OCI-LY7 (cell line): ENCODE measurements at regions of chr5 and their contacts with region 1.

Region 1: GRCh38 chr5:32004404-32004803 is 169.7 kb downstream of the GOLPH3 start:
- DNase-seq: peak; percentile 74
- H3K4me3 ChIP-seq: peak overlapping the region; percentile 52
- H3K27ac ChIP-seq: peak overlapping the region; percentile 80
- H3K4me1 ChIP-seq: peaks cover 34% of the 10 kb centered on the region
- CTCF ChIP-seq: no peak

Region 2: GRCh38 chr5:32020271-32020670 is 15.9 kb after region 1 on chr5:
- CTCF ChIA-PET with region 1: no interaction called
- POLR2A ChIA-PET with region 1: interaction called, 10 read pairs
- intact Hi-C with region 1: no loop called
- DNase-seq: peak; percentile 77
- H3K4me3 ChIP-seq: peak overlapping the region; percentile 53
- H3K27ac ChIP-seq: peak overlapping the region; percentile 63
- H3K4me1 ChIP-seq: peaks cover 56% of the 10 kb centered on the region
- CTCF ChIP-seq: no peak

Region 3: DNA sequence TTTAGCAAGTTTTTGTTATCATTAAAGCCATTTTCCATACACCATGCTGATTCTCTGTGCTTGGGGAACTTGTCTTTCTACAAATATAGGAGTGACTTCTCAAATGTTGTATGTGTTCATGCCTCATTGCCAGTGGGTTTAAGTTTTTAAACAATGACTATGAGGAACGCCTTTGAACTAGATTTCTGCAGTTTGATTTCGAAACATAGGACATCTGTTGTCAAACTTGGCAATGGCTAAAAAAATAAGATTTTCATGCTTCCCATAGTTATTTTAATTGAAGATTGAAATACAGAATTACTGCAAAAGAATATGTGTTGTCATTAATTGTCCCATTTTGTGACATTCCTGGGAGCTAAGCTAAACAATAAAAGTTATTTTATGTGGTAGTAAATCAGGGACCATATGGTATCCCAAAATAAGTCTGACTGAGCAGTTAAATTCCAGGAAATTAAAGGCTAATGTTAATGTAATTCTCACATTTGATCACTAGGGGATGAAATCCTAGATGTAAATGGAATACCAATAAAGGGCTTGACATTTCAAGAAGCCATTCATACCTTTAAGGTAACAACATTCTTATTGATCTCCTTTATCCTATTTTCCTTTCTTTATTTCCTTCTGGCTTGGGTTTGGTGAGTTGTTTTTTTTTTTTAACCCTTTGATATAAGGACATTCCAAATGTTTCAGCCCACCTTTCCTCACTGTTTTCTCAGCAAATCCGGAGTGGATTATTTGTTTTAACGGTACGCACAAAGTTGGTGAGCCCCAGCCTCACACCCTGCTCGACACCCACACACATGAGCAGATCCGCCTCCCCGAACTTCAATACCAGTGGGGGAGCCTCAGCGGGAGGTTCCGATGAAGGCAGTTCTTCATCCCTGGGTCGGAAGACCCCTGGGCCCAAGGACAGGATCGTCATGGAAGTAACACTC is 53.0 kb after region 1 on chr5:
- CTCF ChIA-PET with region 1: no interaction called
- POLR2A ChIA-PET with region 1: no interaction called
- intact Hi-C with region 1: no loop called
- DNase-seq: no peak
- H3K4me3 ChIP-seq: no peak overlapping the region
- H3K27ac ChIP-seq: no peak overlapping the region
- H3K4me1 ChIP-seq: no peaks in the 10 kb centered on the region
- CTCF ChIP-seq: peak; percentile 61

Region 4: GRCh38 chr5:33205727-33206410 is 1201.5 kb after region 1 on chr5:
- CTCF ChIA-PET with region 1: no interaction called
- POLR2A ChIA-PET with region 1: no interaction called
- intact Hi-C with region 1: no loop called
- DNase-seq: no peak
- H3K4me3 ChIP-seq: no peak overlapping the region
- H3K27ac ChIP-seq: no peak overlapping the region
- H3K4me1 ChIP-seq: no peaks in the 10 kb centered on the region
- CTCF ChIP-seq: no peak